ENCODE measurements at regions of chr3 and their contacts with region 1.

Region 1: DNA sequence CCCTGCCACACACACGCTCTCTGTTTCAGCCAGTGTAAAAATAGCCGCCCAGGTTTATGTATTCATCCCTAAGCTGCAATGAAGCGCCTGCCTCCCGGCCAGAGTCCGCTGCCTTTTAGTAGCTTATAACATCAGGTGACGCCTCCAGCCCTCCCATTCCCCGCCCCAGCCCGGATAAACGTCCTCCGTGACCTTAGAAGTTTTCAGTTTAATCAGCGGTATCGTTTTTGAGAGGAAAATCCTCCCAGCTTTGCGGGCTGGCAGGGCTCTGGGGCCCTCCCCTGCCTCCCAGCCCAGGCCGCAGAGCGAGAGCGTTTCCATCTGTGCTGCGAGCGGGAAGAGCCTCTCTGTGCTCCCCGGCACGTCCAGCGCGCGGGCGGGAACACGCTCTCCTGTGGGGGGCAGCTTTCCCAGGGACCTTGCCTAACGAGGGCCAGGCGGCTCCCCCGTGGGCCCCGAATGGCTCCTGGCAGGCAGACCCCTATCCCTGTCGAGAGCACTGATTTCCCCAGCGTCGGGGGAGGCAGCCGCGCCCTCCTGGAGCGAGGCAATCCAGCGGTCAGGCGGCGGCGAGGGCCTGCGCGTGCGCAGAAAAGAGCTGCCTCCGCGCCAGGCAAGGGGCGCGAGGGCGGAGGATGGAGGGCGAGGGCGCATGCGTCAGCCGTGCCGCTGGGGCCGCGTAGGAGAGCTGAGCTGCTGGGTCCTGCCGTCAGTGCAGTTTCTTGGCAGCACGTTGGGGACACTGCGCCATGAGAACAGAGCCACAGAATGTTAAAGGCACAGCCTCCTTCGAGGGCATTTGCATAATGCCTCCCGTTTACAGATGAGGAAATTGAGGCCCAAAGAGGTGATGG is 71.1 kb downstream of the CCNL1 start:
- DNase-seq: peak; percentile 94
- ATAC-seq: peak; percentile 90
- H3K4me3 ChIP-seq: peak overlapping the region; percentile 45
- H3K27ac ChIP-seq: peak overlapping the region; percentile 94
- H3K4me1 ChIP-seq: peaks cover 22% of the 10 kb centered on the region
- H3K27me3 ChIP-seq: no peaks in the 10 kb centered on the region
- CTCF ChIP-seq: 0 out of 2 replicates have a peak, but pooled peaks have one; percentile 19
- POLR2A ChIP-seq: peak; percentile 87
- RAD21 ChIP-seq: 0 out of 2 replicates have a peak, but pooled peaks have one; percentile 17

Region 2: DNA sequence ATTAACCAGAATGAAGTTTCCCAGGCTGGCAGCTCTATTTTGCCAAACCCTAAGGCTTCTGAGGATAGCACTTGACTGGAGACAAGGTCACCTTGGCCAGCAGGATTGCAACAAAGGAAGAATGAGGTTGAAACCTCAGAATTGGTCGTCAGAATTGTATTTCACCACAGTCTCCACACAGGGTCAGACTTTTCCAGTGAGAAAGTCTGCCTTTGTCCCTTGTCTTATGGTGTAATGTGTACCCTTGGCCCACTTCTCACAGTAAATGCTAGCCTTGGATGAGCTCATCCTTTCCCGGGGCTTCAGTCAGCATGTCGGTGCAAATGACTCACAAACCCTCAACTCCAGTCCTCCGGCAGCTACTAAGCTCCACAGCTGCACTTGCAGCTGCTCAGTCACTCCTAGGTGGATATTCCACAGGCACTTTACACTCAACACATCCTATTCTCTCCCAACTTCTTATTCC is 553.6 kb before region 1 on chr3:
- CTCF ChIA-PET with region 1: interaction called, 3 read pairs
- POLR2A ChIA-PET with region 1: interaction called, 4 read pairs
- dilution Hi-C with region 1: no loop called
- in situ Hi-C with region 1: no loop called
- intact Hi-C with region 1: loop called (anchors 5 kb)
- DNase-seq: peak; percentile 100
- ATAC-seq: peak; percentile 88
- H3K4me3 ChIP-seq: no peak overlapping the region
- H3K27ac ChIP-seq: peak overlapping the region; percentile 28; the same call in 1 of the 2 replicates
- H3K4me1 ChIP-seq: peaks cover 18% of the 10 kb centered on the region
- H3K27me3 ChIP-seq: no peaks in the 10 kb centered on the region
- CTCF ChIP-seq: peak; percentile 53
- POLR2A ChIP-seq: peak; percentile 74
- RAD21 ChIP-seq: peak; percentile 61

Region 3: DNA sequence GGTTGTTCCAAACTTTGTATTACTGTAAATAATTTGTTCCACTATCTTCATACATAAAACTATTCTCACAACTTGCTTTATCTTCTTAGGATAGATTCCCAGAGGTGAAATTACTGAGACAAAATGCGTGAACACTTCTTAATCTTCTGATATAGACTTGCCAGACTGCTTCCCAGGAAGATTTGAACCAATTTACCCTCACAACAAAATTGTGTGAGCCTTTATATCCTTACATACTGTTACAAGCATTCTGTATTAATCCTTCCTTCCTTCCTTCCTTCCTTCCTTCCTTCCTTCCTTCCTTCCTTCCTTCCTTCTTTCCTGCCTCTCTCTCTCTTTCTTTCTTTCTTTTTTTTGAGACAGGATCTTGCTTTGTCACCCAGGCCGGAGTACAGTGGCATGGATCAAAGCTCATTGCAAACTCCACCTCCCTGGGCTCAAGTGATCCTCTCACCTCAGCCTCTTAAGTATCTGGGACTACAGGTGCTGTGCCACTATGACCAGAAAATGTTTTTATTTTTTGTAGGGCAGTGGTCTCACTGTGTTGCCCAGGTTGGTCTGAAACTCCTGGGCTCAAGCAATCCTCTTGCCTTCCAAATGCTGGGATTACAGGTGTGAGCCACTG is 476.8 kb before region 1 on chr3:
- CTCF ChIA-PET with region 1: no interaction called
- POLR2A ChIA-PET with region 1: interaction called, 10 read pairs
- dilution Hi-C with region 1: no loop called
- in situ Hi-C with region 1: no loop called
- intact Hi-C with region 1: no loop called
- DNase-seq: no peak
- ATAC-seq: no peak
- H3K4me3 ChIP-seq: no peak overlapping the region
- H3K27ac ChIP-seq: no peak overlapping the region
- H3K4me1 ChIP-seq: peaks cover 8% of the 10 kb centered on the region
- H3K27me3 ChIP-seq: no peaks in the 10 kb centered on the region
- CTCF ChIP-seq: no peak
- POLR2A ChIP-seq: no peak
- RAD21 ChIP-seq: no peak

Region 4: GRCh38 chr3:156948402-156949210 is 140.2 kb before region 1 on chr3:
- CTCF ChIA-PET with region 1: no interaction called
- POLR2A ChIA-PET with region 1: no interaction called
- dilution Hi-C with region 1: no loop called
- in situ Hi-C with region 1: no loop called
- intact Hi-C with region 1: no loop called
- DNase-seq: no peak
- ATAC-seq: no peak
- H3K4me3 ChIP-seq: no peak overlapping the region
- H3K27ac ChIP-seq: no peak overlapping the region
- H3K4me1 ChIP-seq: no peaks in the 10 kb centered on the region
- H3K27me3 ChIP-seq: no peaks in the 10 kb centered on the region
- CTCF ChIP-seq: no peak
- POLR2A ChIP-seq: no peak
- RAD21 ChIP-seq: no peak

Region 5: GRCh38 chr3:156985711-156986110 is 103.1 kb before region 1 on chr3:
- CTCF ChIA-PET with region 1: no interaction called
- POLR2A ChIA-PET with region 1: no interaction called
- dilution Hi-C with region 1: no loop called
- in situ Hi-C with region 1: no loop called
- intact Hi-C with region 1: no loop called
- DNase-seq: no peak
- ATAC-seq: no peak
- H3K4me3 ChIP-seq: no peak overlapping the region
- H3K27ac ChIP-seq: no peak overlapping the region
- H3K4me1 ChIP-seq: no peaks in the 10 kb centered on the region
- H3K27me3 ChIP-seq: no peaks in the 10 kb centered on the region; the same call in 1 of the 2 replicates
- CTCF ChIP-seq: no peak
- POLR2A ChIP-seq: no peak
- RAD21 ChIP-seq: no peak

Region 6: GRCh38 chr3:157130467-157131251 is 41.8 kb after region 1 on chr3:
- CTCF ChIA-PET with region 1: interaction called, 3 read pairs
- POLR2A ChIA-PET with region 1: interaction called, 5 read pairs
- dilution Hi-C with region 1: no loop called
- in situ Hi-C with region 1: loop called (anchors 5 kb)
- intact Hi-C with region 1: no loop called
- DNase-seq: peak; percentile 64
- ATAC-seq: no peak
- H3K4me3 ChIP-seq: no peak overlapping the region
- H3K27ac ChIP-seq: 0 out of 2 replicates have a peak overlapping the region, but pooled peaks have one; percentile 10
- H3K4me1 ChIP-seq: peaks cover 35% of the 10 kb centered on the region
- H3K27me3 ChIP-seq: no peaks in the 10 kb centered on the region
- CTCF ChIP-seq: peak; percentile 74
- POLR2A ChIP-seq: no peak
- RAD21 ChIP-seq: peak; percentile 76

Region 7: DNA sequence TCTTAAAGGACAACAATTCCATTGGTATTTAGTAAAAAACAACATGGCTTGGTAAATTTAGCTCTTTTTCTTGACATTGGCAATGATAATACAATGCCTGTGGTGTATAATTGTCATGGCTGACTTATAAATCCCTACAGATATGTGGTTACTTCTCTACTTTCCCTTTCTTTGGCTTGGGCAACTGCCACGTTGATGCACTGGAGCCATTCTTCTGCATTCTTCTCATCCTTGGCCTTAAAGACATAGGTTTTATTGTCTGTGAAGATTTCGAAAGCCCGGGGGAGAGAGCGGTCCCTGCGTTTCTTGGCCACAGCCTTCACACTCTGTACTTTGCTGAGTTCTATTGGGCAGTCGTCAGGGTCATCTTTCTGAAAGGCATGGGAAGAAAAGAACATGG is 172.2 kb after region 1 on chr3:
- CTCF ChIA-PET with region 1: no interaction called
- POLR2A ChIA-PET with region 1: no interaction called
- dilution Hi-C with region 1: no loop called
- in situ Hi-C with region 1: no loop called
- intact Hi-C with region 1: no loop called
- DNase-seq: no peak
- ATAC-seq: no peak
- H3K4me3 ChIP-seq: no peak overlapping the region
- H3K27ac ChIP-seq: no peak overlapping the region
- H3K4me1 ChIP-seq: no peaks in the 10 kb centered on the region; the same call in 1 of the 2 replicates
- H3K27me3 ChIP-seq: no peaks in the 10 kb centered on the region
- CTCF ChIP-seq: no peak
- POLR2A ChIP-seq: no peak
- RAD21 ChIP-seq: no peak

Region 8: DNA sequence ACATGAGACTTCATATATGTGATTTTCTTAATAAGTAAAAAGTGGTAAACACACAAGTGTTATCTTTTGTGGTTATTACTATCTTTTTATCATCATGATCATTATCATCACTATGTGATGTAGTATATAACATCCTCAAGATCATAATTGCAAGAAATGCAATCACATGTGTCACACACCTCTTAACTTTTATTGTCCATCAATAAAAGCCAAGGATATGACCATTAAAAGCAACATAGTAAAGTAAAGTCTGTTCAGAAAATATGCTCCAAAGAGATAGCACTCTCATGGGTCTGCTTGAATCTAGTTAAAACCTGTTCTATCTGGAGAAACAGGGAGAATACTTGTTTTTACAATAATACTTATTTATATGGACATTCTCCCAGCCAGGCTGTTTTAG is 1329.2 kb after region 1 on chr3:
- CTCF ChIA-PET with region 1: no interaction called
- POLR2A ChIA-PET with region 1: no interaction called
- dilution Hi-C with region 1: no loop called
- in situ Hi-C with region 1: no loop called
- intact Hi-C with region 1: no loop called
- DNase-seq: no peak
- ATAC-seq: no peak
- H3K4me3 ChIP-seq: no peak overlapping the region
- H3K27ac ChIP-seq: no peak overlapping the region
- H3K4me1 ChIP-seq: no peaks in the 10 kb centered on the region
- H3K27me3 ChIP-seq: no peaks in the 10 kb centered on the region
- CTCF ChIP-seq: no peak
- POLR2A ChIP-seq: no peak
- RAD21 ChIP-seq: no peak

Measured in IMR-90 (cell line).